ENCODE measurements at regions of chr10 and their contacts with region 1.

Region 1: DNA sequence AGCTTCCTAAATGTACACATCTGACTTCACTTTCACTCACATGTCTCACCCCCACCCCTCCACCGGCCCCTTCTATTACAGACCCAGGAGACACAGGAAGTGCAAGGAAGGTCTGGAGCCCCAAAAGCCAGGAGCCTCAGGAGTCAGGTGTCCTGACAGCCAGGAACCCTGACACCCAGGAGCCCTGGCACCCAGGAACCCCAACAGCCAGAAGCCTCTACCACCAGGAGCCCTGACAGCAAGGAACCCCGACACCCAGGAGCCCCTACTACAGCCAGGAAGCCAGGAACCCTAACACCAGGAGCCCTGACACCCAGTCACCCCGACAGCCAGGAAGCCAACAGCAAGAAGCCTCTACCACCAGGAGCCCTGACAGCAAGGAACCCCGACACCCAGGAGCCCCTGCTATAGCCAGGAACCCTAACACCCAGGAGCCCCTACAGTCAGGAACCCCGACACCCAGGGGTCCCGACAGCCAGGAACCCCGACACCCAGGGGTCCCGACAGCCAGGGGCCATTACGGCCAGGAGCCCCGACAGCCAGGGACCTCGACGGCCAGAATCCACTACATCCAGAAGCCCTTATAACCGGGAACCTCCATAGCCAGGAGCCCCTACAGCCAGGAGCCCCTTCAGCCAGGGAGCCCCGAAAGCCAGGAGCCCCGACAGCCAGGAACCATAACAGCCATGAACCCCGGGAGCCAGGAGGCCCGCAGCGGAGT is 526 bp upstream of the GLRX3 start:
- DNase-seq: no peak
- H3K4me3 ChIP-seq: peak overlapping the region; percentile 96
- H3K27ac ChIP-seq: peak overlapping the region; percentile 75
- H3K4me1 ChIP-seq: peaks cover 3% of the 10 kb centered on the region
- H3K27me3 ChIP-seq: no peaks in the 10 kb centered on the region
- CTCF ChIP-seq: no peak

Region 2: GRCh38 chr10:129459762-129460539 is 675.7 kb before region 1 on chr10:
- intact Hi-C with region 1: no loop called
- DNase-seq: no peak
- H3K4me3 ChIP-seq: no peak overlapping the region
- H3K27ac ChIP-seq: no peak overlapping the region
- H3K4me1 ChIP-seq: no peaks in the 10 kb centered on the region
- H3K27me3 ChIP-seq: no peaks in the 10 kb centered on the region
- CTCF ChIP-seq: no peak

Region 3: GRCh38 chr10:130111852-130112180 is 23.8 kb before region 1 on chr10:
- intact Hi-C with region 1: loop called (anchors 2 kb)
- DNase-seq: no peak
- H3K4me3 ChIP-seq: peak overlapping the region; percentile 67
- H3K27ac ChIP-seq: peak overlapping the region; percentile 97
- H3K4me1 ChIP-seq: peaks cover 11% of the 10 kb centered on the region
- H3K27me3 ChIP-seq: no peaks in the 10 kb centered on the region
- CTCF ChIP-seq: no peak

Region 4: GRCh38 chr10:130215151-130215930 is 79.7 kb after region 1 on chr10:
- intact Hi-C with region 1: no loop called
- DNase-seq: no peak
- H3K4me3 ChIP-seq: no peak overlapping the region
- H3K27ac ChIP-seq: no peak overlapping the region
- H3K4me1 ChIP-seq: no peaks in the 10 kb centered on the region
- H3K27me3 ChIP-seq: no peaks in the 10 kb centered on the region
- CTCF ChIP-seq: no peak

Measured in colonic mucosa (tissue), 4 donors.